Posterior vena cava (tissue), 2 donors: ENCODE measurements at regions of chr2 and their contacts with region 1.

Region 1: GRCh38 chr2:68127358-68128242 is 30.1 kb upstream of the PNO1 start:
- DNase-seq: no peak

Region 2: DNA sequence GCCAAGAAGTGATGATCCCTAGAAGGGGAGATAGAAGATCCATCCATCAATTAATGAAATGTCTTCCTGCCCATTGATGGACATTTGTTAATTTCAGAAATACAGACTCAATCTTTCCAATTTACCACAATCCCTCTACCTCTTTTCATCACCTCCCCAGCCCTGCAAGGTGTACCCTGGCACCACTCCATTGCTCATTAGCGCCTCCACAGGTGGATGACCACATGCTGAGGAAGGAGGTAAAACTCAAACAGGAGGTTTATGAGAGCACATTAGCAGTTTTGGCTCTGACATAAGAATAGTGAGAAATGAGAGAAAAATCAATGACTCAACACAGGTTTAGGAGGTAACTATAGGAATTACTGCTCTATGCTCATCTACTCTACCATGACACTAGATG is 272.8 kb before region 1 on chr2:
- intact Hi-C with region 1: no loop called
- DNase-seq: no peak

Region 3: GRCh38 chr2:68203587-68203986 is 76.0 kb after region 1 on chr2:
- intact Hi-C with region 1: loop called in 1 of 2 experiments (anchors 2 kb)
- DNase-seq: no peak

Region 4: DNA sequence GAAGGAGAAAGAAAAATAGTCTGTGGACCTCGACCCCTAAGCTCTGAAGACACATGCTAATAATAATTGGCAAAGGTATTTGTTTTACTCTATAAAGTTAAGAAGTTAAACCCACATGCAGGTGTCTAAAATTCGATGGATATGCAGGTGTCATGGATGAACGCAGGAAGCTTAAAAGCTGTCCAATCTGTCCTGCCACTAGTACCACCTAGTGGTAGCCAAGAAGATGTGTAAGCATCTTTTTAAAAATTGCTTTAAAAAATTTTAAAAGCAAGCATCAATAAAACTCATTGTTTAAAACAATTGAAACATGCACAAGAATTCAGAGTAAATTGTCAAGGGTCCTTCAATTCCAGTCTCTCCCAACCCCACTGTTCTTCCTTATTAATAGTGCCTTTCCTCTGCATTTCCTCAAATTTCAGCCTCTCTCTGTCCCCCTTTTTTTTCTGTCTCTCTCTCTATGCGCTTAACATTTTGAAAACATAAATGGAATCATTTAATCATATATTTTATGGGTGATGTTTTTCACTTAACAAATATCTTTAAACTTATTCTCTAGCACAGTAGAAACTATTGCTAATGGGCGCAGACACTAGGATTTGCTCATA is 155.3 kb after region 1 on chr2:
- intact Hi-C with region 1: loop called in 1 of 2 experiments (anchors 5 kb)
- DNase-seq: no peak